Activated CD4-positive, alpha-beta memory T cell treated with anti-CD3 and anti-CD28 coated beads for 36 hours (primary cell): ENCODE measurements at regions of chr1 and their contacts with region 1.

Region 1: DNA sequence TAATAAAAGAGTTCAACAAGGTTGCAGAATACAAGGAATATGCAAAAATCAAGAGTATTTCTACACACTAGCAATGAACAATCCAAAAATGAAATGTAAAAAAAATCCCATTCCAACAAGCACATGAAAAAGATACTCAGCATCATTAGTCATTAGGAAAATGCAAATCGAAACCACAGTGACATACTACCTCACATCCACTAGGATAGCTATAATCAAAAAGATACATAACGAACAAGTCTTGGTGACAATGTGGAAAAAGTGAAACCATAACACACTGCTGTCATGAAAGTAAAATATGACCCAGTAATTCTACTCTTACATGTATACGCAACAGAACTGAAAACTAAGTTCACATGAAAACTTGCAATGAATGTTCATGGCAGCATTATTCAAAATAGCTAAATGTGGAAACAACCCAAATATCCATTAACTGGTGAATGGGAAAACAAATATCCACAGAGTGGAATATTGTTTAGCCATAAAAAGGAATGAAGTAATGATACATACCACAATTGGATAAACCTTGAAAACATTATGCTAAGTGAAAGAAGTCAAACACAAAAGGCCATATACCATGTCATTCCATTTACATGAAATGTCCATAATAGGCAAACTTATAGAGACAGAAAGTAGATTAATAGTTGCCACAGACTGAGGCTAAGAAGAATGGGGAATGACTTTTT is 34.3 kb downstream of the PIK3R3 start:
- DNase-seq: no peak
- H3K4me3 Mint-ChIP-seq: no peak overlapping the region
- H3K27ac Mint-ChIP-seq: no peak overlapping the region
- H3K4me1 Mint-ChIP-seq: peaks cover 15% of the 10 kb centered on the region
- H3K27me3 Mint-ChIP-seq: peaks cover 3% of the 10 kb centered on the region

Region 2: DNA sequence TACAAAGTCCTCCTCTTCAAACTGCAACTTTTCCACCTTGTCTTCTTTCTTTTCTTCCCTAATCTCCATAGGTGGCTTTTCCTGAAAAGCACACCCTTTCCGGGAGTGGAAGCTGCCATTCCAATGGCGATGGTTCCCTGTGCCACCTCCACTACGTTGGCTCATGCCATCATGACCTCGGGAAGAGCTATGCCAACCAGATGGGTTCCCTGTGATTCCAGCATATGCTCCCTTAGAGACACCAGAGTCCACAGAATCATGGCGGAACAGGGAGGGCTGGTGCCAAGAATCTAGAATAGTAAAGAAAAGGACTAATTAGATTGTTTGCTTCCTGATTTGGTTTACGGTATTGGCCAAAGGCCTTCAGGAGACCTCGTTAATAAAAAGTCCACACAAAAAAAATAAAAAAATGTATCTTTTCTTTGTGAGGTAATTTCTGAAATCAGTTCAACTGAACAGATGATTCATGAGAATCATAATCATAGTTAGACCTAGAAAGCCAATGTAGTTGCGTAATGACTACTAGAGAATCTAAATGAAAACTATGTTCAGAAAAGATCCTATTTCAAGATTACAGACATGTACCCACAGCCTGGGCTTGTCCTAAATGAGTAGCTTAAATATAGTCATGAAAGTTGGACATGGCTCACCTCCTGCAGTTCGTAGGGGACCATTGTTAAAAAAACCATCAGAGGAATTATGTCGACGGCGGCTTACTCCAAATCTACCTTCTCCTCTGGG is 443.5 kb before region 1 on chr1:
- CTCF ChIA-PET with region 1: no interaction called
- POLR2A ChIA-PET with region 1: no interaction called
- intact Hi-C with region 1: no loop called
- DNase-seq: peak; percentile 34
- H3K4me3 Mint-ChIP-seq: peak overlapping the region; percentile 20
- H3K27ac Mint-ChIP-seq: peak overlapping the region; percentile 61
- H3K4me1 Mint-ChIP-seq: peaks cover 22% of the 10 kb centered on the region
- H3K27me3 Mint-ChIP-seq: no peaks in the 10 kb centered on the region

Region 3: GRCh38 chr1:46062651-46063319 is 35.4 kb before region 1 on chr1:
- CTCF ChIA-PET with region 1: no interaction called
- POLR2A ChIA-PET with region 1: no interaction called
- intact Hi-C with region 1: loop called (anchors 2 kb)
- DNase-seq: peak; percentile 73
- H3K4me3 Mint-ChIP-seq: no peak overlapping the region
- H3K27ac Mint-ChIP-seq: no peak overlapping the region
- H3K4me1 Mint-ChIP-seq: peaks cover 16% of the 10 kb centered on the region
- H3K27me3 Mint-ChIP-seq: no peaks in the 10 kb centered on the region